Naive thymus-derived CD4-positive, alpha-beta T cell (primary cell): ENCODE measurements at regions of chr14 and their contacts with region 1.

Region 1: DNA sequence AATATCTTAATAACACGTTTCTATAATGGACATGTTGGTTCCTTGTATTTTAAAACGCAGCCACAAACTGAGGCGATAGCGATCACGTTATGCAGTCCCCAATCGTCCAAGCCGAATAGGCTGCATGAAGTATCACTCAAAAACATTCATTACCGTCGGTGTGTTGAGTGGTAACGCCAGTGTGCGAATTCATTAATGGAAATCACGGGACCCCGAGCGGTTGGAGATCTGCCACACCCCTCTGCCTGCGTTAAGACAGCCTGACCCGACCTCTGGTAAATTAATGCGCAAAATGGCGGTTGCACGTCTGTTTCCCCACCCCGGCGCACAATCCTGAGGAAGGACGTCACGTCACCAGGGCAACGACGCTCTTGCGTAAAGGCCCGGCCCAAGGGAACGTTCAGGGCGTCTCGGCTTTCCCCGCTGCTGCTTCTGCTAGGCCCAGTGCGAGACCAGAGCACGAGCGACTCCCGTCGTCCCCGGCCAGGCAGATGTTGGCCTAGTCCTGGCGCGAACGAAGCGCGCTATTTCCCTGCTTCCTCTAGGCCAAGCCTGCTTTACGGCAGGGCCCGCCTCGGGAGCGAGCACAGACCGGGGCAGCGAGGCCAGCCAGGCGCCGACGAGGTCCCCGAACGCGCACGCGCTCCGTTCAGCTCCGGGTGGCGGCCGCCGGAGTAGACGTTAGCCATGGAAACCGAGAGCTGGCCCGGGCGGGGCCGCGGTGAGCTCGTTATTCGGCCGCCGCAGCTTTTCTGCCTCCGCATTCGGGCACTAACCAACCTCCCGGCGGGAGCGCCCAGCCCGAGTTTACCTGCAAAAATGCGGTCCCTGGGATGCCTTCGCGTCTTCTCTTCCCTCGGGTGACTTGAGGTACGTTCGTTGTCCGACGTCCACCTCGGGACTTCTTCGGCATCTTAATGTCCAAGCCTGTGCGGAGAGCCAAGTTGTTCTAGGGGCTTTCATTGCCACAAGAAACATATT is at the start of gene PCNX4:
- DNase-seq: peak; percentile 79 to 95 (median 94)
- ATAC-seq: peak; percentile 95
- H3K4me3 ChIP-seq: peak within 1 kb of the TSS; percentile 94
- H3K4me3 Mint-ChIP-seq: peak within 1 kb of the TSS; percentile 88 to 98 (median 95)
- H3K27ac ChIP-seq: peak within 1 kb of the TSS; percentile 96
- H3K27ac Mint-ChIP-seq: peak within 1 kb of the TSS; percentile 90 to 99 (median 96)
- H3K4me1 ChIP-seq: peaks cover 14 to 16% of the 10 kb centered on the region in 2 donors
- H3K4me1 Mint-ChIP-seq: peaks cover 28 to 48% (median 41%) of the 10 kb centered on the region in 7 donors
- H3K27me3 ChIP-seq: peaks cover 0 to 4% of the 10 kb centered on the region in 2 donors
- H3K27me3 Mint-ChIP-seq: peaks cover 0 to 5% (median 0%) of the 10 kb centered on the region in 5 donors
- total RNA-seq, gene PCNX4: 34.9 to 48.2 (median 43.3) TPM

Region 2: GRCh38 chr14:60064491-60065072 is 27.3 kb before region 1 on chr14:
- CTCF ChIA-PET with region 1: no interaction called
- POLR2A ChIA-PET with region 1: interaction called, 3 read pairs
- intact Hi-C with region 1: loop called in 1 of 2 experiments (anchors 1 kb)
- DNase-seq: peak in 4 of 9 donors; percentile 28 to 39 (median 36)
- ATAC-seq: peak; percentile 70
- H3K4me3 ChIP-seq: no peak overlapping the region
- H3K4me3 Mint-ChIP-seq: no peak overlapping the region
- H3K27ac ChIP-seq: no peak overlapping the region
- H3K27ac Mint-ChIP-seq: no peak overlapping the region
- H3K4me1 ChIP-seq: no peaks in the 10 kb centered on the region
- H3K4me1 Mint-ChIP-seq: no peaks in the 10 kb centered on the region
- H3K27me3 ChIP-seq: no peaks in the 10 kb centered on the region
- H3K27me3 Mint-ChIP-seq: peaks cover 0 to 7% (median 4%) of the 10 kb centered on the region in 5 donors

Region 3: DNA sequence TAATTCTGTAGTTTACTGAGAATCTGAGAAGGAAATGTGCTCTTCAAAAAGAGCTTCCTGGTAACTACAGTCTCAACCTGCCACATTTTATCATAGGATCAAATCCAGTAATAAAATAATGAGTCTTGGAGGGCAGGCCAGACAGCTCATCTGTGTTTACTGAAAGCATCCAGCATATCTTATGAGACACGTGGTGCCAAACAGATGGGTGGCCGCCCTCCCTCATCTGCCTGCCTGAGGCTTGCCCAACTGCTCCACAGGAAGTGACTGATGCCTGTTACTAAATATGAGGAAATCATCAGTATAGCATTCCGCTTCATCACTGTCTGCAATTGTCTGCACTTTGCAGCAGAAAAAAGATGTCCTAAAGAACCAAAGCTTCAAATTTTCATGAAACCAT is 59.9 kb after region 1 on chr14:
- CTCF ChIA-PET with region 1: no interaction called
- POLR2A ChIA-PET with region 1: interaction called, 4 read pairs
- intact Hi-C with region 1: loop called (anchors 1 kb)
- DNase-seq: peak; percentile 13 to 69 (median 60)
- ATAC-seq: peak; percentile 98
- H3K4me3 ChIP-seq: no peak overlapping the region
- H3K4me3 Mint-ChIP-seq: peak overlapping the region in 8 of 10 donors; percentile 3 to 43 (median 36)
- H3K27ac ChIP-seq: peak overlapping the region; percentile 52
- H3K27ac Mint-ChIP-seq: peak overlapping the region; percentile 84 to 94 (median 88)
- H3K4me1 ChIP-seq: peaks cover 23% of the 10 kb centered on the region in 2 donors
- H3K4me1 Mint-ChIP-seq: peaks cover 28 to 56% (median 48%) of the 10 kb centered on the region in 7 donors
- H3K27me3 ChIP-seq: no peaks in the 10 kb centered on the region
- H3K27me3 Mint-ChIP-seq: no peaks in the 10 kb centered on the region

Region 4: DNA sequence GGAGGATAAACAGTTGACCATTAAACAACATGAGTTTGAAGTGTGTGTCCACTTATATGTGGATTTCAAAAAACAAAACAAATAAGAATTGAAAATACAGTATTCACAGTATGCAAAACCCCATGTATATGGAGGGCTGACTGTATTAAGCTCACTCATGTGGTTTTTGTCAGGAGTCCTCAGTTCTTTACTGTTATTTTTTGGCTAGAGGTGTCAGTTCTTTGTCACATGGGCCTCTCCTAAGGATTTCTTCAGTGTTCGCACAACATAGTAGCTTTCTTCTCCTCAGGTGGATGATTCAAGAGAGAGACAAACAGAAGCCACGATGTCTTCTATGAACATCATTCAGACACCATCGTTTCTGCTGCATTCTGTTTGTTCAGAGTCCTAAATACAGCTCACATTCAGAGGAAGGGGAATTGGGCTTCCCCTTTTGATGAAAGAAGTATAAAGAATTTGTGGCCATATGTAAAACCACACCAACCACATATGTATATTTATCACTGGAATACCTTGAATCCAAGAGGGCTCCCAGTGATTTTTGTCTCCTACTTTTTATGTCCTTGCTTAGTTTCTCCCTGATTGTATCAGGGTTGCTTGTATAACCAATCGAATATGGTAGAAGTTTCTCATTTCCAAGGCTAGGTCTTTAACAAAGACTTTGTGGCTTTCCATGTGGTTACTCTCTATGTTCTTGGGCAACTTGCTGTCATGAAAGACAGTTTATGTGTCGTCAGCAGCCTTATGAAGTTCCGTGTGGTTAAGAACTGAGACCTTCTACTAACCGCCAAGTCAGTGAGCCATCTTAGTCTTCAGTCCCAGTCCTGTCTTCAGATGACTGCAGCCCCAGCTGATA is 661.7 kb after region 1 on chr14:
- CTCF ChIA-PET with region 1: no interaction called
- POLR2A ChIA-PET with region 1: no interaction called
- intact Hi-C with region 1: loop called in 1 of 2 experiments (anchors 5 kb)
- DNase-seq: peak in 8 of 9 donors; percentile 54 to 86 (median 81)
- ATAC-seq: peak; percentile 96
- H3K4me3 ChIP-seq: no peak overlapping the region
- H3K4me3 Mint-ChIP-seq: peak overlapping the region in 9 of 10 donors; percentile 48 to 85 (median 61)
- H3K27ac ChIP-seq: no peak overlapping the region
- H3K27ac Mint-ChIP-seq: peak overlapping the region; percentile 29 to 93 (median 81)
- H3K4me1 ChIP-seq: peaks cover 19 to 20% of the 10 kb centered on the region in 2 donors
- H3K4me1 Mint-ChIP-seq: peaks cover 21 to 64% (median 42%) of the 10 kb centered on the region in 7 donors
- H3K27me3 ChIP-seq: no peaks in the 10 kb centered on the region
- H3K27me3 Mint-ChIP-seq: peaks cover 0 to 7% (median 0%) of the 10 kb centered on the region in 5 donors

Region 5: GRCh38 chr14:60867503-60868172 is 775.8 kb after region 1 on chr14:
- CTCF ChIA-PET with region 1: no interaction called
- POLR2A ChIA-PET with region 1: no interaction called
- intact Hi-C with region 1: no loop called
- DNase-seq: no peak
- ATAC-seq: no peak
- H3K4me3 ChIP-seq: no peak overlapping the region
- H3K4me3 Mint-ChIP-seq: no peak overlapping the region
- H3K27ac ChIP-seq: no peak overlapping the region
- H3K27ac Mint-ChIP-seq: no peak overlapping the region
- H3K4me1 ChIP-seq: no peaks in the 10 kb centered on the region
- H3K4me1 Mint-ChIP-seq: peaks cover 0 to 5% (median 0%) of the 10 kb centered on the region in 7 donors
- H3K27me3 ChIP-seq: no peaks in the 10 kb centered on the region
- H3K27me3 Mint-ChIP-seq: peaks cover 0 to 4% (median 0%) of the 10 kb centered on the region in 5 donors